ENCODE measurements at regions of chr3 and their contacts with region 1.

Region 1: GRCh38 chr3:69410250-69410649 is 24.4 kb upstream of the FRMD4B start:
- DNase-seq: no peak
- H3K4me3 ChIP-seq: no peak overlapping the region
- CTCF ChIP-seq: peak; percentile 80

Region 2: GRCh38 chr3:69357196-69357595 is 53.1 kb before region 1 on chr3:
- CTCF ChIA-PET with region 1: interaction called, 10 read pairs
- POLR2A ChIA-PET with region 1: no interaction called
- DNase-seq: no peak
- H3K4me3 ChIP-seq: no peak overlapping the region
- CTCF ChIP-seq: no peak

Region 3: DNA sequence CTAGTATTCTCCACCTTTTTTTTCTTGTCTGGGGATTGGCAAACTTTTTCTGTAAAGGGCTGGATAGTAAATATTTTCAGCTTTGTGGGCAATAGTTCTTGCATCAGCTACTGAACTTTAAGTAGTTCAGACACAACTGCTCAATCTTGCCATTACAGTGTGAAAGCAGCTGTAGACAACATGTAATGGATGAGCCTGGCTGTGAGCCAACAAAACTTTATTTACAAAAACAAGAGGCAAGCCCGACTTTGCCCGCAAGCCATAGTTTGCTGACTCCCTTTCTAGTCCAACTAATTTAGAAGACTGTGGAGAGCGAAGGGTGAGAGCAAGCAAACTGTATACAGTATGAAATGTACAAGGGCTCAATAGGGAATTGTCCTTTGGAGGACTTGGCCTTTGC is 30.6 kb before region 1 on chr3:
- CTCF ChIA-PET with region 1: interaction called, 32 read pairs
- POLR2A ChIA-PET with region 1: no interaction called
- DNase-seq: no peak
- H3K4me3 ChIP-seq: no peak overlapping the region
- CTCF ChIP-seq: no peak

Region 4: DNA sequence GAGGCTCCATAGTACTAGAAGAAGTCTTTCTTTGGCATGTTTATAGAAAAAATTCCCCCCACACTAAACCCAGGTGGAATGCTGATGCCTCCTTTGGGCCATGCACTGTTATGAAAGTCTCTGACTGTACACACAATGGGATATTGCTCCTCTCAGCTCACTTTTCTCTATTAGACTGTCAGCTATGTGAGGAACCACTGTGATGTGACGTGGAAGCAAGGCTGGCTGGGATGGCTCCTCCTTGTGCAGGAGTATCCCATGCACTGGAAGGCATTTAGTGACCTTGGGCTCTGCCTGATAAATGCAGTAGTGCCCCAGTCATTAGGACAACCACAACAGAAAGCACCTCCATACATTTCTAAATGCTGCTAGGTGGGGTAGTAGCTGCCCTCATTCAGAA is 18.7 kb before region 1 on chr3:
- CTCF ChIA-PET with region 1: interaction called, 85 read pairs
- POLR2A ChIA-PET with region 1: no interaction called
- DNase-seq: no peak
- H3K4me3 ChIP-seq: no peak overlapping the region
- CTCF ChIP-seq: no peak

Region 5: GRCh38 chr3:69439643-69440270 is 29.5 kb after region 1 on chr3:
- CTCF ChIA-PET with region 1: interaction called, 13 read pairs
- POLR2A ChIA-PET with region 1: no interaction called
- DNase-seq: no peak
- H3K4me3 ChIP-seq: no peak overlapping the region
- CTCF ChIP-seq: peak; percentile 38

Region 6: DNA sequence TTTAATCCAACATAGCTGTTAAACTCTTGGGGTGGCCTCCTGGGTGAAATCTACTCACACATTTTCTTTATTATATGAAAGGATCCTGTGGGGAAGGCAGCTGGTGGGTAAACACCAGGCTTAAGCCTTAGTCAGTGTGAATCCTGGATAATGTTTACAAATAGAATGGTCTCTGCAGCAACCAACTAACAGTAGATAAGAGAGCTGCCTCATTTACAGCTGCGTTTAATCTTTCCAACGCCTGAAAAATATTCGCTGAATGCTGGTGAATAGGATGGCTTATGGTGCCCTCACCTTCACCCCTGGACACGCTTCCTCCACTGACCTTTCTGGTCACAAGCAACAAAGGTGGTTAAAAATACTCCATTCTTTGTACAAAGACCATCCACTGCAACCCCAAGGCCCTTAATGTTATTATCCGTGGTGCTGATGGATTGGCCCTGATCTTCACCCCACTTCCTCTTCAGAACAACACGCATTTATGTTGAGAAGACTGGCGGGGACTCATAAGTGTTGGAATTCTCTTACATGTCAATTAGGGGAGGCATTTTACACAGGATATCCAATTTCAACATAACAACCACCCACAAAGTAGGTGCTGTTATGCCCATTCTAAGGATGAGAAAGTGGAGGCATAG is 95.6 kb after region 1 on chr3:
- CTCF ChIA-PET with region 1: no interaction called
- POLR2A ChIA-PET with region 1: no interaction called
- DNase-seq: no peak
- H3K4me3 ChIP-seq: no peak overlapping the region
- CTCF ChIP-seq: no peak